Dorsolateral prefrontal cortex (tissue), 120 donors: ENCODE measurements at regions of chr20 and their contacts with region 1.

Region 1: DNA sequence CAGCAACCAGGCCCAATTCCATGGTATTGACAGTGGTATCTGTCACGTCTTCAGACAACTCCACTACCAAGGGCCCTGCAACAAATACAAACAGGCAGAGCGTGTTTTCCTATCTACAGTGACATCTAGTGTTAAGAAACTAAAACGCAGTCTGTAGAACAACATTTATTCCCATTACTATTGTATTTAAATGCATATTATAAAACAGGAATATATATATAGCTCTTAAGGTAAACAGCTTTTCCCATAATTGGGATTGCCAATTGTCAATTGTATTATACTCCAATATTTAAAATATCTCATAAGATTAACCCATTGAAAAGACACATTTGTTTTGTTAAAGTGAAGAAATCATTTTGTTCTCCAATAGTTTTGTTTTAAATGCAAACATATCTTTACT is 97.2 kb downstream of the KIF16B start:
- DNase-seq: no peak
- H3K4me3 ChIP-seq: no peak overlapping the region
- H3K27ac ChIP-seq: peak overlapping the region in 5 of 59 donors; percentile 9 to 55 (median 16)
- H3K27me3 ChIP-seq: no peaks in the 10 kb centered on the region
- CTCF ChIP-seq: peak; percentile 52 to 90 (median 74)

Region 2: GRCh38 chr20:16350465-16350864 is 125.6 kb before region 1 on chr20:
- intact Hi-C with region 1: loop called in 1 of 2 experiments (anchors 10 kb)
- DNase-seq: peak in 4 of 10 donors; percentile 37 to 72 (median 43)
- H3K4me3 ChIP-seq: no peak overlapping the region
- H3K27ac ChIP-seq: peak overlapping the region in 25 of 59 donors; percentile 0 to 69 (median 46)
- H3K27me3 ChIP-seq: no peaks in the 10 kb centered on the region
- CTCF ChIP-seq: no peak

Region 3: DNA sequence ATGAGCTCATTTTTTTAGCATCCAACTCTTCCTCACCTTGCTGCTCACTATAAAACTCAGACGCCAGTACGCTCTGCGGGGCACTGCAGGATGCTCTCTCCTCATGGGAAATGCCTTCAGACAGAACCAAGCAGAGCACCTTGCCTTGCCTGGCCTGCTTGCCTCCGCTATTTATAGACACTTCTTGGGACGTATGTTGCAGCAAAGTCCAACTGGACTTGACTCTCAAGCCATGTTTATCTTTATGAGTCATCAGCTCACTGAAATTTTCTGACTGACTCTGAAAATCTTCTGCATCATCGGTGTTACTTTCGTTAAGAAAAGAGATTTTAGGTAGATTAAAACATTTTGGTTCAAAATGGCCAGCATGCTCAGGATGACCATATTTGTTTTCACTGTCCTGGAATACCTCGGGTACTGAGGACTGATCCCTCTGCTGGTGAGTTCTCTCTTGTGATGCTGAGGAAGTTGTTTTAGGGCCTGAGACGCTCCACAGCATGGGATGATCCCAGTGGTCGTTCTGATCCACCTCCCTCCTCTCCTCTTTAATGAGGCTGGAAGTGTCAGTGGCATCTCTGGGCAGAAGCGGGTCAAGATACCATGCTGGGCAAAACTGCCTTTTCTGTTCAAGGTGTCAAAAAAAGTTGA is 107.3 kb before region 1 on chr20:
- intact Hi-C with region 1: loop called in 1 of 2 experiments (anchors 10 kb)
- DNase-seq: no peak
- H3K4me3 ChIP-seq: no peak overlapping the region
- H3K27ac ChIP-seq: no peak overlapping the region
- H3K27me3 ChIP-seq: no peaks in the 10 kb centered on the region
- CTCF ChIP-seq: no peak